Right ventricle myocardium inferior (tissue), 1 donor: ENCODE measurements at regions of chr11 and their contacts with region 1.

Region 1: DNA sequence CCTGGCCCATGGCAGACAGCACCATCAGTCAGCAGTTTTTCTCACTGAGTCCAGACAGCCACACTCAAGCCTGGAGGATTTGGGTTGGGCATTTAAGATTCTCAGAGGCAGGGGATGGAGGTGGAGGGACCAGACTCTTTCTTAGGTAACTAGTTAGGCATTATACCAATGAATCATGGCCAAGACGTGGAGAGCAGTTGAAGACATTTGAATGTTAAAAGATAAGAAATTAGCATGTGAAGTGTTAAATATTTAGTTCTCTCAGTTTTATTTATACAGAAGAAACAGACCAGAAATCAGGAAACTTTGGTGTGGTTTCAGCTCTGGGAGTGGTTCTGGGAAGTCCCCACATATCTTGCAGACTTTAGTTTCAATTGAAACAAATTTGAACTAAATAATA is 9.9 kb downstream of the GTF2H1 start:
- DNase-seq: no peak
- ATAC-seq: no peak

Region 2: DNA sequence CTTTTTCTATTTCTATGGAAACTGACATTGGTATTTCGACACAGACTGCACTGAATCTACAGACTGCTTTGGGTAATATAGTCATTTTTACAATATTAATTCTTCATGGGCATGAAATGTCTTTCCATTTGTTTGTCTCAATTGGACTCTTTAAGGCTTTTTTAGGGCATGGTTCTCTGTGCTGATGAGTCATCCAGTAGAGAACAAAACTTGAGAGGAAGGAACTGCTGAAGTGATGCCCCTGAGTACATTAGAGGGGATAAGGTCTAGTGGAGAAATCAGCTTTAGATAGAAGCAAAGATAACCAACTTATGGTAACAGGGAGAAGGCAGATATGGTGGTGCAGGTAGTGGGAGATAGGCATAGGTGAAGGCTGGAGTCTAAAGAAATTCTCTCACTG is 169.3 kb after region 1 on chr11:
- intact Hi-C with region 1: loop called (anchors 10 kb)
- DNase-seq: no peak
- ATAC-seq: no peak